Ovary (tissue), 10 donors: ENCODE measurements at regions of chr4 and their contacts with region 1.

Region 1: DNA sequence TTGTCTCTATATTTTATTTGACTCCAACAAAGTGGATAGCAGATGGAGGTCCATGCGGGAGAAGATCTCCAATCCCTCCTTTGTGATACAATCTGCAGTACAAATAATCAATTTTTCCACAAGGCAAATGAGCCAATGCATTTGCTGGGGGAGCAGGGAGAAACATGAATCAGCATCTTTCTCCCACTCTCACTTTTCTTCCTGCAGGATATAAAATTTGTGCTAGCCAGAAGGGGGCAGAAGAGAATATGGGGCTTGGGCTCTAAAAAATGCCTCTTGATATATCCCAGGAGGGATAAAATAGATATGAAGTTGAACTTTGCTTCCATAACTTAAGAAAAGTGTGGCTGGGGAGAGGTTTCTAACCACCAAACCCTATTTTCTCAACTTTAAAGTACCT is 38.3 kb upstream of the CWH43 start:
- DNase-seq: no peak
- H3K4me3 ChIP-seq: no peak overlapping the region
- H3K27ac ChIP-seq: no peak overlapping the region
- H3K4me1 ChIP-seq: no peaks in the 10 kb centered on the region
- H3K27me3 ChIP-seq: no peaks in the 10 kb centered on the region
- CTCF ChIP-seq: no peak
- EP300 ChIP-seq: no peak
- POLR2A ChIP-seq: no peak

Region 2: GRCh38 chr4:48710446-48711209 is 237.1 kb before region 1 on chr4:
- intact Hi-C with region 1: no loop called
- DNase-seq: no peak
- H3K4me3 ChIP-seq: no peak overlapping the region
- H3K27ac ChIP-seq: no peak overlapping the region
- H3K4me1 ChIP-seq: no peaks in the 10 kb centered on the region
- H3K27me3 ChIP-seq: no peaks in the 10 kb centered on the region
- CTCF ChIP-seq: no peak
- EP300 ChIP-seq: no peak
- POLR2A ChIP-seq: no peak

Region 3: GRCh38 chr4:48879541-48880442 is 67.9 kb before region 1 on chr4:
- intact Hi-C with region 1: loop called in 1 of 4 experiments (anchors 2 kb)
- DNase-seq: no peak
- H3K4me3 ChIP-seq: no peak overlapping the region
- H3K27ac ChIP-seq: no peak overlapping the region
- H3K4me1 ChIP-seq: no peaks in the 10 kb centered on the region
- H3K27me3 ChIP-seq: no peaks in the 10 kb centered on the region
- CTCF ChIP-seq: no peak
- EP300 ChIP-seq: no peak
- POLR2A ChIP-seq: no peak